ENCODE measurements at regions of chr4 and their contacts with region 1.

Region 1: GRCh38 chr4:25159884-25160713 is at the start of gene SEPSECS:
- DNase-seq: peak; percentile 83

Region 2: DNA sequence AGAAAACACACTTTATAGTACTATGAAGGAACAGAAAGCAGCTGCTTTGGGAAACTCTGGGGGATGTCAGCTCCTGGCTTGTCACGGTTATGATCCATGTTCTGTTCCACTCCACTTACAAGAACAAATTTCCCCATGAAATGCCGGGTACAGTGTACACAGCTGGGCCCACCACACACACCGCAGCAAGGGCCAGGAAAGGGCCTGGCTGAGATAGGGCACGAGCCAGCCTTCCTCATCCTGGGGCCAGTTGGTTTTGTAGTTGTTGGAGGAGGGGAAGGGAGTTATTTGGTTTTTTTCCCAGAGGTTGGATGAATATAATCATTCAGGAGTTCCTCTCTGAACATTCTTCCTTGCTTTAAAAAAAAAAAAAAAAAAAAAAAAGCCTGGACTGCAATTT is 56.7 kb before region 1 on chr4:
- CTCF ChIA-PET with region 1: no interaction called
- POLR2A ChIA-PET with region 1: no interaction called
- DNase-seq: no peak

Region 3: GRCh38 chr4:25234390-25235370 is 74.6 kb after region 1 on chr4:
- CTCF ChIA-PET with region 1: no interaction called
- POLR2A ChIA-PET with region 1: interaction called, 14 read pairs
- DNase-seq: peak; percentile 21